AG04449 (cell line): ENCODE measurements at regions of chr3 and their contacts with region 1.

Region 1: GRCh38 chr3:107574650-107575049 is 51.9 kb downstream of the BBX start:
- DNase-seq: no peak
- H3K4me3 ChIP-seq: no peak overlapping the region
- CTCF ChIP-seq: peak; percentile 35

Region 2: DNA sequence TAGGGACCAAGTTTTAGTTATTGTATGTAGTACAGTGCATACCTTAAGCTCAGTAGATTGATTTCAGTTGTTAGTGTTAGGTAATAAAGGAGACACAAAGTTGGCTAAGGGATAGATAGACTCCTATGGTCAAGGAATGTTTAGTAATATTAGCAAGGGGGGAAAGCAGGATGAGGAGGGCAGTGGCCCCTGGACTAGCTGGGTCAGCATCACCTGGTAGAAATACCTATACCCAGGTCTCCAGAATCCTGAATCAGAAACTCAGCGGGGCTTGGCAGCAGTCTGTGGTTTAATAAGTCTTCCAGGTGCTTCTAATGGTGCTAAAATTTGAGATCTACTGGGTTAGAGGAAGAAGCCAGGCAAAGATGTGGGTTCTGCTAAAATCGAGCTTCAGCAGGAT is 16.9 kb before region 1 on chr3:
- CTCF ChIA-PET with region 1: interaction called, 12 read pairs
- POLR2A ChIA-PET with region 1: no interaction called
- DNase-seq: no peak
- H3K4me3 ChIP-seq: no peak overlapping the region
- CTCF ChIP-seq: no peak

Region 3: DNA sequence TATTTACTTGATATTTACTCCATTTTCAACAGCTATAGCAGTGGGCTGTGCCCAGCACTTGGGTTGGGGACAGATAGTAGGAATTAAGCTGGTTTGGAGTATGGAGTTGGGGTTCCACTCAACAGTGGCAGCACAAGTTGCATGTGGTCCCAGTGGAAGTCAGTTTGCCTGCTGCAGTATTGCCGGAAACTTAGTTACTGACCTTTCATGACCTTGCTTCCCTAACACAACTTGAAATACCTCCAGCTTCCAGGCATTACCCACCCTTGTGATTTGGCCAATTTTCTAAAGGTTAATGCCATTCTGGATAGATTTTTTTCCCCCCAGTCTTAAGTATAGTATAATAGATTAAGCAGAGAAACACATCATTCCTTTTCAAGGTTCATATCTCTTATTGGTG is 16.1 kb after region 1 on chr3:
- CTCF ChIA-PET with region 1: interaction called, 17 read pairs
- POLR2A ChIA-PET with region 1: no interaction called
- DNase-seq: no peak
- H3K4me3 ChIP-seq: no peak overlapping the region
- CTCF ChIP-seq: no peak

Region 4: DNA sequence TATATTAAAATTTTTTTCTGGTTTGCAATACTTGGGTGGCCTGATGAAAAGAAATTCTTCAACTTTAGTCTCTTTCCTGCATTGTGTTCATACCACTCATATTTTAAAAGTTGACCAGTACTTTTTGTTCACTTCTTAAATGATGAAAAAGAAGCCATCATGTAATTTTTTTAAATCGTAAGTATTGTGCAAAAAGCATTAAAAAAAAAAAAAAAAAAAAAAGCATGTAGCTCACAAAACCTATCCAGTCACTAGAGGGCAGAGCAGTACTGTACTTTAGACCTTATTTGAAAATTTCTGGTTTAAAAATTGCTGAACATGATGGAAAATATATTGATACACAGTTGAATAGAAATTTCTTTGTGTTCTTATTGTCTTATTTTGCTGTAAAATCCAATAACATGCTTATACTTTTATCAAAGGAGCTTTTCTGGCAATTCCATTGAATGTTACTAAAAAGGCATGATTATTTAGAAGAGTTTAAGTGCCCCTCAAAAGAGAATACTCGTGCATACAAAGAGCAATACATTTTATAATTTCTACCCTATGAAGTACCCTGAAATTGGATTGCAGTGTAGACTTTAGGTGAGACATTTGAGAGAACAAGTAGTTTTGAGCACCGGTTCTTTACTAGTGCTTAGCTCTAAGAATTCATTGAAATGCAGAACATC is 85.8 kb after region 1 on chr3:
- CTCF ChIA-PET with region 1: interaction called, 37 read pairs
- POLR2A ChIA-PET with region 1: no interaction called
- DNase-seq: peak; percentile 53
- H3K4me3 ChIP-seq: no peak overlapping the region
- CTCF ChIP-seq: peak; percentile 37

Region 5: DNA sequence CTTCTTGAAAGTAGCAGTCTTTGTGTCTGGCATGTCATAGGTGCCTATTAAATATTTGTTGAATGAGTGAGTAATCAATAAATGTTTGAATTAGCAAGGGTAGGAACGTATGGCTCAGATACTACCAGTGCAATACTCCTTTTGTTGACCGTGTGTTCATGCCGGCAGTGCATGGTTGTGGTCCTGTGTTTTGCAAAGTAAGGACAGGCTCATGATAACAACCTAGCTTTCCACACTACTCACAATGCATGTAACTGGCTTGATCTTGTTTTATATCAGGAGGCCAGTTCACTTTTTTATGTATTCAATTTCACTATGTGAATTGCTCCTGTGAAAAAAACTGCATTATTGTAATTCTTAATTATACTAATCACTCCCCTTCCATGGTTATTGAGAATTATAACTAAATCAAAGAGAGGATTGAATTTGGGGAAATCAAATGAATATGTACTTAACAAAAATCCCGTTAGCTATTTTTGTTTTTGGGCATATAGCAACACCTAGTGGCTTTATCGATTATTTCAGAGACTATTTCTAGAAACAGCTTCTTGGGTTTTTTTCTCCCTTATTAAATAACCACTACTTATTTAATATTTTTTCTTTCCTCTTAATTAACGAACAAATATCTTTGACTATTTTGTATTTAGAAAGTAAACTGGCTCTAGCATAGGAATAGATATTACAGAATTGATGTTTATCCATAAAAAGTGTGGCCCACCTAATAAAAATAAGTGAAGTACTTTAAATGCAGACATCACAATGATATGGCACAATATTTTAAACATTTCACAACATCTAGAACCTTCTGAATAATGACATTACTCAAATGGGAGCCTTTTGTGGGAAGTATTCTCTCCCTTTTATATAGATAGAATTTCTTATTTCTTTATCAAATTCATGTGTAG is 166.6 kb after region 1 on chr3:
- CTCF ChIA-PET with region 1: interaction called, 52 read pairs
- POLR2A ChIA-PET with region 1: no interaction called
- DNase-seq: no peak
- H3K4me3 ChIP-seq: no peak overlapping the region
- CTCF ChIP-seq: peak; percentile 13

Region 6: DNA sequence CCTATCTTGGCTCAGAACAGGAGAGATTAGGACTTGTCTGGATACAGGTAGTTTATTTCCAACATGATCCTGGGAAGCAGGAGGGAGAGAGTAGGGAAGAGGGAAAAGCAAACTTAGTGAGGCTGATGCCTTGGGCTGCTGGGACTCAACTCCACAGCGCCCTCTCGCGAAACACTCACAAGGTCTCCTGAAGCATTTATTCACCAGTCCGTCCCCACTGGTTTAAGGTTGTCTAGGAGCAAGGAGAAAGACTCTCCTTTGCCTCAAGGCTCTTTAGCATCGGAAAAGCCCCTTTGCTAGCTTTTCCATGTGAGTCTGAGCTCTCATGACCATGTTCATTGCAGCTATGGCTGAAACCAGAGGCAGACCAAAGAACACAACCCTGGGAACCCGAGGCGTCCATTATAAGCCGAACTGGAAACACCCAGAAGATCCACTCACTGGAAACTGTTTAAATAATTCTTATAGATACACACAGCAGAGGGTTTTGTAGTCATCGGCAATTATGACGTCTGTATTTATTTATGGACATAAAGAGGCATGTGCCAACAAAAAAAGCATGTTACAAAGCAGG is 271.7 kb after region 1 on chr3:
- CTCF ChIA-PET with region 1: interaction called, 15 read pairs
- POLR2A ChIA-PET with region 1: no interaction called
- DNase-seq: no peak
- H3K4me3 ChIP-seq: no peak overlapping the region
- CTCF ChIP-seq: peak; percentile 82